PC-9 (cell line): ENCODE measurements at regions of chr11 and their contacts with region 1.

Region 1: DNA sequence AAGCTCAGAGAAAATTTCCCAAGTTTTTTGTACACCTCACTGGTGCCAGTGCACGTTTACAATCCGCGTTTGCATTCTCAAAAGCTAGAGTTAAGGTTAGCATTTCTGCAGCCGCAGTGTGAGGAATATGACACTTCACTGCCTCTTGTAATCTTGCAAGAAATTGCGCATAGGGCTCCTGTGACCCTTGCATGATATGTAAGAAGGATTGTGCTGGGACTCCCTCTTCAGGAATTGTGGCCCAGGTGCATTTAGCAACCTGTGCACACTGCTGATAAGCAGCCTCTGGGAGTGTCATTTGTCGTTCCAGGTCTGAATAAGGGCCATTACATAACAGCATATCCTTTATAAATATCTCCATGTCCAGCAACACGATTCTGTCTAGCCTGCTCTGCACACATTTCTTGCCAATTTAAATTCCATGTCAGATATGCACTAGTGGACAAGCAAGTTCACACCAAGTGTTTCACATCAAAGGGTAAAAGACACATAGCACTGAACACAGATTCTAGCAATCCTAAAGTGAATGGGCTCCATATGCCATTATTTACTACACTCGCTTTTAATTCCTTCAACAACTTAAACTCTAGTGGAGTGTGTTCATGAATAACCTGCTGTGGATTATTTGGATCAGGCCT is 69.2 kb upstream of the INCENP start:
- DNase-seq: peak; percentile 80 to 95
- H3K4me3 ChIP-seq: no peak overlapping the region; the same call in 1 of the 2 replicates
- H3K27ac ChIP-seq: peak overlapping the region; percentile 85
- H3K4me1 ChIP-seq: peaks cover 53% of the 10 kb centered on the region
- H3K27me3 ChIP-seq: no peaks in the 10 kb centered on the region
- CTCF ChIP-seq: peak; percentile 89

Region 2: DNA sequence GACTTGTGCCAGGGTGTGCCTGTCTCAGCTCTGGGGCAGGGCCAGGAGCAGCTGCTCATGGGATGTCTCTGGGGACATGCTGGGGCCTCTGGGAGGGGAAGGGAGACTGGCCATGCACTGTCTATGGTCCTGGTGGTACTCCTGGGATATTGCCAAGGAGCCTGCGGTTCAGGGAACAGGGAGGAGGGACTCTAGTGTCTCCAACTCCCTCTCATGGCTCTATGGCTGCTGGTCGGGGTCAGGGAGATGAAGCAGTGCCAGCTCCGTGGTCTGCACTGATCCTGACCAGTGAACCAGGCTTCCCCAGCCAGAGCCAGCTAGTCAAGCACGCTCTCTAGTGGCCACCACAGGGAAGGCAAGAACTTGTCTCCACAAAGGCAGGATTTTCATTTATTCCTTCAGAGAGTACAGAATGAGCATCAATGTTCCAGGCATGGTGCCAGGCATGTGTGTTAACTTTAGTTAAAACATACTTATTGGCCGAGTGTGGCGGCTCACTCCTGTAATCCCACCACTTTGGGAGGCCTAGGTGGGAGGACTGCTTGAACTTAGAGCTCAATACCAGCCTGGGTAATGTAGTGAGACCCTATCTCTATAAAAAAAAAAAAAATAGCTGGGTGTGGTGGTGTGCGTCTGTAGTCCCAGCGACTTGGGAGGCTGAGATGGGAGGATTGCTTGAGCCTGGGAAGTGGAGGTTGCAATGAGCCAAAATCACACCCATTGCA is 107.0 kb before region 1 on chr11:
- CTCF ChIA-PET with region 1: interaction called, 4 read pairs
- POLR2A ChIA-PET with region 1: no interaction called
- intact Hi-C with region 1: loop called (anchors 1 kb)
- DNase-seq: peak; percentile 61 to 77
- H3K4me3 ChIP-seq: no peak overlapping the region
- H3K27ac ChIP-seq: no peak overlapping the region
- H3K4me1 ChIP-seq: peaks cover 23% of the 10 kb centered on the region
- H3K27me3 ChIP-seq: no peaks in the 10 kb centered on the region
- CTCF ChIP-seq: peak; percentile 95

Region 3: GRCh38 chr11:61985885-61986345 is 68.7 kb before region 1 on chr11:
- CTCF ChIA-PET with region 1: interaction called, 4 read pairs
- POLR2A ChIA-PET with region 1: interaction called, 13 read pairs
- intact Hi-C with region 1: no loop called
- DNase-seq: peak in 1 of 2 experiments; percentile 95
- H3K4me3 ChIP-seq: peak overlapping the region; percentile 26; the same call in 1 of the 2 replicates
- H3K27ac ChIP-seq: peak overlapping the region; percentile 49
- H3K4me1 ChIP-seq: peaks cover 31% of the 10 kb centered on the region
- H3K27me3 ChIP-seq: no peaks in the 10 kb centered on the region
- CTCF ChIP-seq: no peak

Region 4: GRCh38 chr11:62013591-62014476 is 40.8 kb before region 1 on chr11:
- CTCF ChIA-PET with region 1: interaction called, 8 read pairs
- POLR2A ChIA-PET with region 1: interaction called, 5 read pairs
- intact Hi-C with region 1: loop called (anchors 2 kb)
- DNase-seq: peak; percentile 80 to 83
- H3K4me3 ChIP-seq: peak overlapping the region; percentile 33; the same call in 1 of the 2 replicates
- H3K27ac ChIP-seq: peak overlapping the region; percentile 72
- H3K4me1 ChIP-seq: peaks cover 46% of the 10 kb centered on the region
- H3K27me3 ChIP-seq: no peaks in the 10 kb centered on the region
- CTCF ChIP-seq: no peak

Region 5: GRCh38 chr11:62025487-62026105 is 29.0 kb before region 1 on chr11:
- CTCF ChIA-PET with region 1: interaction called, 4 read pairs
- POLR2A ChIA-PET with region 1: no interaction called
- intact Hi-C with region 1: loop called (anchors 1 kb)
- DNase-seq: peak; percentile 73 to 100
- H3K4me3 ChIP-seq: peak overlapping the region; percentile 22; the same call in 1 of the 2 replicates
- H3K27ac ChIP-seq: peak overlapping the region; percentile 89
- H3K4me1 ChIP-seq: peaks cover 36% of the 10 kb centered on the region
- H3K27me3 ChIP-seq: no peaks in the 10 kb centered on the region
- CTCF ChIP-seq: no peak

Region 6: GRCh38 chr11:62081378-62082291 is 27.0 kb after region 1 on chr11:
- CTCF ChIA-PET with region 1: interaction called, 5 read pairs
- POLR2A ChIA-PET with region 1: no interaction called
- intact Hi-C with region 1: loop called (anchors 1 kb)
- DNase-seq: peak; percentile 66 to 82
- H3K4me3 ChIP-seq: no peak overlapping the region
- H3K27ac ChIP-seq: no peak overlapping the region
- H3K4me1 ChIP-seq: no peaks in the 10 kb centered on the region
- H3K27me3 ChIP-seq: no peaks in the 10 kb centered on the region
- CTCF ChIP-seq: peak; percentile 98